H1 (cell line): ENCODE measurements at regions of chr18 and their contacts with region 1.

Region 1: DNA sequence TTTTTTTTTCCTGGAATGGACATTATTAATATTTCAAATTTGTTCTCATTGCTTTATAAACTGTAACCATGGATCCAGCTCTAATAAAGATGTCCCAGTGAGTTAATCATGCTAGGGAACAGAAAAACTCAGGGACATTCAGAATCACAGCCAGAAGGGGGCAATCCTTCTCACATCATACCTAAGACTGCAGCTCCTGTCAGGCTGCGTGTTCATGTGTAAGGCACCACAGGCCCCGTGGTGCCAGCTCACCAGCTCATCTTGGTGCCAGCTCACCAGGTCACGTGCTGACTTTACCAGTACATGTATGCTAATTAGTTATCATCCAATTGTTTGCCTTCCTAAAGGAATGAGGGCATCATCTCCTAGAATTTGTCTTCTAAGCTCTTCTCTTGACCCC is 84.7 kb upstream of the NEDD4L start:
- DNase-seq: no peak
- H3K4me3 ChIP-seq: no peak overlapping the region
- H3K27ac ChIP-seq: no peak overlapping the region
- H3K4me1 ChIP-seq: peaks cover 0 to 3% (median 0%) of the 10 kb centered on the region in 4 experiments; a peak in 1 of 7 replicates
- H3K27me3 ChIP-seq: no peaks in the 10 kb centered on the region
- CTCF ChIP-seq: peak; percentile 41 to 66 (median 55)
- EP300 ChIP-seq: no peak
- POLR2A ChIP-seq: no peak
- RAD21 ChIP-seq: peak; percentile 62 to 69

Region 2: GRCh38 chr18:57881818-57882413 is 77.4 kb before region 1 on chr18:
- CTCF ChIA-PET with region 1: interaction called, 10 read pairs
- POLR2A ChIA-PET with region 1: no interaction called
- DNase-seq: peak in 1 of 2 experiments; percentile 61
- H3K4me3 ChIP-seq: no peak overlapping the region
- H3K27ac ChIP-seq: no peak overlapping the region
- H3K4me1 ChIP-seq: no peaks in the 10 kb centered on the region
- H3K27me3 ChIP-seq: no peaks in the 10 kb centered on the region
- CTCF ChIP-seq: peak; percentile 85 to 95 (median 93)
- EP300 ChIP-seq: no peak
- POLR2A ChIP-seq: no peak
- RAD21 ChIP-seq: peak; percentile 90 to 96

Region 3: DNA sequence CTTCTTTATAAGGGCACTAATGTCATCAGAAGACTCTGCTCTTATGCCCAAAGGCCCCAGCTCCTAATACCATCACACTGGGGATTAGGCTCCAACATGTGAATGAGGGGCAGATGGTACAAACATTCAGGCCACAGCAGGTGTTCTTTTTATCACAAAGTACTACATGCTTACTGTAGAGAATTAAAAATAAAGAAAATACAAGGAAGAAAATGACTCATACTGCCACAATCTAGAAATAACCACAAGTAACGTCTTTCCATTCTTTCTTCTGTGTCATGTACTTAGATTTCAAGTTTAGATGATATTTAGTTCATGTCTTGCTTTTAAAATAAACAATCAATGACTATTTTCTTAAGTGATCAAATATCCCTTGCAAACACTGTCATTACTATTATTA is 15.6 kb before region 1 on chr18:
- CTCF ChIA-PET with region 1: interaction called, 16 read pairs
- POLR2A ChIA-PET with region 1: no interaction called
- DNase-seq: no peak
- H3K4me3 ChIP-seq: no peak overlapping the region
- H3K27ac ChIP-seq: no peak overlapping the region
- H3K4me1 ChIP-seq: peaks cover 0 to 2% (median 0%) of the 10 kb centered on the region in 4 experiments; a peak in 3 of 7 replicates
- H3K27me3 ChIP-seq: peaks cover 0 to 2% (median 0%) of the 10 kb centered on the region in 4 experiments; a peak in 1 of 7 replicates
- CTCF ChIP-seq: no peak
- EP300 ChIP-seq: no peak
- POLR2A ChIP-seq: no peak
- RAD21 ChIP-seq: no peak

Region 4: DNA sequence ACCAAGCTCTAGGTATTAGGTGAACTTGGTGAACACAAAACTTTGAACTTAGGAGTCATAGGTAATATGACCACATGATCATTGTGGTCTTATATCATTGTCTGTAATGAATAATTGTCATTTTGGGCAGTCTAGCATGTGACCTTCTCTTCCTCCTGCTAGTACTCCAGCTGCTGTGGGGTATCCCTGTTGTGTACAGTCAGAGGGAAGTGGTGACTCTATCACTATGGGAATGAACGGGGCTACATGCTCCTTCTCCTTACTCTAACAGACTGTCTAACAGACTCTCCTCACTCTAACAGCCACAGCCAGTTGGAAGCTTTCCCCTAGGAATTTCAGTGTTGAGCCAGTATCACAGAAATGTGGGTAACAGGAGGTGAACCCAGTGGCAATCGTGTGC is 16.5 kb after region 1 on chr18:
- CTCF ChIA-PET with region 1: interaction called, 29 read pairs
- POLR2A ChIA-PET with region 1: no interaction called
- DNase-seq: no peak
- H3K4me3 ChIP-seq: no peak overlapping the region
- H3K27ac ChIP-seq: no peak overlapping the region
- H3K4me1 ChIP-seq: no peaks in the 10 kb centered on the region; a peak in 3 of 7 replicates
- H3K27me3 ChIP-seq: no peaks in the 10 kb centered on the region
- CTCF ChIP-seq: no peak
- EP300 ChIP-seq: no peak
- POLR2A ChIP-seq: no peak
- RAD21 ChIP-seq: no peak

Region 5: GRCh38 chr18:58043491-58044379 is 84.5 kb after region 1 on chr18 and contains the start of gene NEDD4L:
- CTCF ChIA-PET with region 1: interaction called, 11 read pairs
- POLR2A ChIA-PET with region 1: no interaction called
- DNase-seq: peak in 1 of 2 experiments; percentile 87
- H3K4me3 ChIP-seq: peak within 1 kb of the TSS; percentile 73 to 99 (median 84)
- H3K27ac ChIP-seq: peak within 1 kb of the TSS; percentile 53; the same call in 1 of the 2 replicates
- H3K4me1 ChIP-seq: peaks cover 3 to 7% (median 5%) of the 10 kb centered on the region in 4 experiments; a peak in 5 of 7 replicates
- H3K27me3 ChIP-seq: no peaks in the 10 kb centered on the region; a peak in 1 of 7 replicates
- CTCF ChIP-seq: peak; percentile 74 to 90 (median 90)
- EP300 ChIP-seq: no peak
- POLR2A ChIP-seq: no peak
- RAD21 ChIP-seq: peak; percentile 91 to 93
- total RNA-seq, gene NEDD4L: 63.4 and 69.8 TPM in 2 replicates